WTC11 (cell line): ENCODE measurements at regions of chr12 and their contacts with region 1.

Region 1: DNA sequence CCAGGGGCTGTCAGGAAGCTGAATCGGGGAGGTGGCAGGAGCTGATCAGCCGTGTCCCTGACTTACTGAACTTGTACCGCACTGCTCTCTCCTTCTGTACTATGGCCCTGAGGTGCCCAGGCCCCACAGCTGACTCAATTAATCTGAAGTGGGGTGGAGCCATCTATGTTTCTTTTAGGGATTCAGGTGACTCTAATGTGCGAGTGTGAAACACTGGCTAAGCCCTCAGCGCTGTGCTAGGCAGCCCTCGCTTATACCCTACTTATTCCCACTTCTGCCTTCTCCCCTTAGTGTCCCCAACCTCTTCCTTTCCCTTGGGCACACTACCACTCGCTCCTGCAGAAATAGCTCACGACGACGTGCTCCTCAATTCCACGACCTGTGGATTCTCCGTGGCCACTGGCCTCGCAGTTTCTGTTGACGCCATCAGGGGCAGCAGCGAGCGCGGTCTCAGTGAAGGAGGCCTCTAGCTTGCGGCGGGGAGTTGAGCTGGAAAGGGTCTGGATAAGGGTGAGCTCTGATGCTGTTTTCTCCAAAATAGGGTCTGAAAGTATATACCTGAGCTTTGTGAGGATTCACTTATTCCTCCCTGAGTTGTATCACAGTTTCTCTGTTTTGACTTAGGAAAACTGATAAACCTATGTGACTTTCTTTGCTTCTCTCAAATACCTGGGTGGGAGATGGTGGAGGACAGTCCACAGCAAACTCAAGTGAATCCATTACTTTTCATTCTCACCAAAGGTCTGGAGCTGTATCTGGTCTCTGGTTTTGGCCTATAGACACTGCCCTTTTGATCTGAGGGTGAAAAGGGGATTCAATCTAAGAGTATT is 167.6 kb downstream of the SLC41A2 start:
- DNase-seq: peak; percentile 79
- ATAC-seq: peak; percentile 82
- H3K4me3 Mint-ChIP-seq: peak overlapping the region; percentile 69
- H3K27ac Mint-ChIP-seq: peak overlapping the region; percentile 48; the same call in 1 of the 2 replicates
- H3K4me1 Mint-ChIP-seq: peaks cover 28% of the 10 kb centered on the region
- H3K27me3 Mint-ChIP-seq: peaks cover 7% of the 10 kb centered on the region
- CTCF ChIP-seq: peak; percentile 67

Region 2: GRCh38 chr12:104687823-104688573 is 102.5 kb before region 1 on chr12:
- CTCF ChIA-PET with region 1: interaction called, 3 read pairs
- POLR2A ChIA-PET with region 1: interaction called, 10 read pairs
- DNase-seq: no peak
- ATAC-seq: no peak
- H3K4me3 Mint-ChIP-seq: no peak overlapping the region
- H3K27ac Mint-ChIP-seq: no peak overlapping the region
- H3K4me1 Mint-ChIP-seq: no peaks in the 10 kb centered on the region
- H3K27me3 Mint-ChIP-seq: no peaks in the 10 kb centered on the region
- CTCF ChIP-seq: no peak

Region 3: DNA sequence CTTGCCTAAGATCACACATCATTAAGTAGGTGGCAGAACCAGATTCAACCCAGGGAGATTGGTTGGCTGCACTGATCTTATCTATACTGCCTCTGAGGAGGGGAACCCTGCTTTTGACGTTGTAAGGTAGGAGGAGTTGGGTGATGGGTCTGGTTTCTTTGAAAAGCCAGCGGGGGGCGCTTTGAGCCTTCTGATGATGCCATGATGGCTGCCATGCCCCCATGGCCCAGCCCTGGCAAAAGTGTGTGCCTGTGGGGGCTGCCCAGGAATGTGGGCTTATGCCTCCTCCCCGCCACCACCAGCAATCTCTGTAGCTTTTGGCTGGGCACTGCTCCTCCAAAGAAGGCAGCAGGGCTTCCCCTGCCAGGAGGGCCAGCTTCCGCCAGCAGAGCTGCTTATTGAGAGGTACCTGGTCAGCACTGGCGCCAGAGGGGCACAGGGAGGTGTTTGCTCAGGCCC is 56.8 kb before region 1 on chr12:
- CTCF ChIA-PET with region 1: interaction called, 11 read pairs
- POLR2A ChIA-PET with region 1: no interaction called
- DNase-seq: peak; percentile 67
- ATAC-seq: peak; percentile 71
- H3K4me3 Mint-ChIP-seq: no peak overlapping the region
- H3K27ac Mint-ChIP-seq: no peak overlapping the region
- H3K4me1 Mint-ChIP-seq: peaks cover 31% of the 10 kb centered on the region
- H3K27me3 Mint-ChIP-seq: no peaks in the 10 kb centered on the region
- CTCF ChIP-seq: no peak

Region 4: GRCh38 chr12:104761091-104761490 is 29.4 kb before region 1 on chr12:
- CTCF ChIA-PET with region 1: interaction called, 13 read pairs
- POLR2A ChIA-PET with region 1: no interaction called
- DNase-seq: no peak
- ATAC-seq: peak; percentile 92
- H3K4me3 Mint-ChIP-seq: no peak overlapping the region
- H3K27ac Mint-ChIP-seq: no peak overlapping the region
- H3K4me1 Mint-ChIP-seq: peaks cover 29% of the 10 kb centered on the region
- H3K27me3 Mint-ChIP-seq: no peaks in the 10 kb centered on the region; the same call in 1 of the 2 replicates
- CTCF ChIP-seq: no peak

Region 5: GRCh38 chr12:104769144-104769561 is 21.4 kb before region 1 on chr12:
- CTCF ChIA-PET with region 1: interaction called, 13 read pairs
- POLR2A ChIA-PET with region 1: no interaction called
- DNase-seq: no peak
- ATAC-seq: peak; percentile 48
- H3K4me3 Mint-ChIP-seq: no peak overlapping the region
- H3K27ac Mint-ChIP-seq: peak overlapping the region; percentile 11; the same call in 1 of the 2 replicates
- H3K4me1 Mint-ChIP-seq: peaks cover 32% of the 10 kb centered on the region
- H3K27me3 Mint-ChIP-seq: no peaks in the 10 kb centered on the region
- CTCF ChIP-seq: no peak

Region 6: DNA sequence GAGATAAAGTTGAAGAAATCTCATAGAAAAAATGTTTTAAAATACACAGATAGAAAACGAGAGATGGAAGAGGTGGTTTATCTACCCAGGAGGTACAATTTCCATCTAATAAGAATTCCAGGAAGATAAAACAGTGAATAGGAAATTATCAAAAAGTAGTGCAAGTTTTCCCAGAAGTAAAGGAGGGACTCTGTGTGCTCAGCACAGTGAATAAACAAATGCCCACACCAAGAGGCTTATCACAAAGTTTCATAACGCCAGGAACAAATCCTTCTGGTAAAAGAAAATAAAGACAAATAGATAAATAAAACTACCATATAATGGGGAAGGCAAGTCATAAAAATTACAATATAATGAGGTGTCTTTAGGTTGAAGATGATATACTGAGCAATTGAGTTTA is 11.4 kb before region 1 on chr12:
- CTCF ChIA-PET with region 1: interaction called, 13 read pairs
- POLR2A ChIA-PET with region 1: no interaction called
- DNase-seq: no peak
- ATAC-seq: no peak
- H3K4me3 Mint-ChIP-seq: no peak overlapping the region
- H3K27ac Mint-ChIP-seq: no peak overlapping the region
- H3K4me1 Mint-ChIP-seq: no peaks in the 10 kb centered on the region
- H3K27me3 Mint-ChIP-seq: peaks cover 3% of the 10 kb centered on the region
- CTCF ChIP-seq: no peak

Region 7: DNA sequence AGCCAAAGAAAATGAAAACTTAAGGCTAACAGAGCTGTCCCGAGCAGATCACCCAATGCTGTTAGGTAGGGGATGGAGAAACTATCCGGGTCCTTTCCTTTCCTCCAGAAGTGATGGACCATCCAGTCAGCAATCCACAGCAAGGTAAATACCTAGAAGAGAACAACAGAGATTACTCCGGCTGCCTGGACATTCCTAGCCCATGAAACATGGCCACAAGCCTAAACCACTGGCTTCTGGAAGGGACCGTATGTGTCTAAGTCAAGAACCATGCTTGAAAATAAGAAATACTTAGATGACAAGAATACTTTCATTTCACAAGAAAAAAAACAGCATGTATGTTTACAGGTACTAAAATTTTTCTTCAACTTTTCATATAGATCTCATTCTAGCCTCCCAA is 14.7 kb after region 1 on chr12:
- CTCF ChIA-PET with region 1: interaction called, 18 read pairs
- POLR2A ChIA-PET with region 1: no interaction called
- DNase-seq: no peak
- ATAC-seq: no peak
- H3K4me3 Mint-ChIP-seq: no peak overlapping the region
- H3K27ac Mint-ChIP-seq: no peak overlapping the region
- H3K4me1 Mint-ChIP-seq: no peaks in the 10 kb centered on the region
- H3K27me3 Mint-ChIP-seq: no peaks in the 10 kb centered on the region
- CTCF ChIP-seq: no peak

Region 8: GRCh38 chr12:105001476-105001875 is 211.0 kb after region 1 on chr12:
- CTCF ChIA-PET with region 1: no interaction called
- POLR2A ChIA-PET with region 1: no interaction called
- DNase-seq: no peak
- ATAC-seq: no peak
- H3K4me3 Mint-ChIP-seq: no peak overlapping the region
- H3K27ac Mint-ChIP-seq: no peak overlapping the region
- H3K4me1 Mint-ChIP-seq: no peaks in the 10 kb centered on the region
- H3K27me3 Mint-ChIP-seq: no peaks in the 10 kb centered on the region
- CTCF ChIP-seq: no peak